ENCODE measurements at regions of chr1 and their contacts with region 1.

Region 1: DNA sequence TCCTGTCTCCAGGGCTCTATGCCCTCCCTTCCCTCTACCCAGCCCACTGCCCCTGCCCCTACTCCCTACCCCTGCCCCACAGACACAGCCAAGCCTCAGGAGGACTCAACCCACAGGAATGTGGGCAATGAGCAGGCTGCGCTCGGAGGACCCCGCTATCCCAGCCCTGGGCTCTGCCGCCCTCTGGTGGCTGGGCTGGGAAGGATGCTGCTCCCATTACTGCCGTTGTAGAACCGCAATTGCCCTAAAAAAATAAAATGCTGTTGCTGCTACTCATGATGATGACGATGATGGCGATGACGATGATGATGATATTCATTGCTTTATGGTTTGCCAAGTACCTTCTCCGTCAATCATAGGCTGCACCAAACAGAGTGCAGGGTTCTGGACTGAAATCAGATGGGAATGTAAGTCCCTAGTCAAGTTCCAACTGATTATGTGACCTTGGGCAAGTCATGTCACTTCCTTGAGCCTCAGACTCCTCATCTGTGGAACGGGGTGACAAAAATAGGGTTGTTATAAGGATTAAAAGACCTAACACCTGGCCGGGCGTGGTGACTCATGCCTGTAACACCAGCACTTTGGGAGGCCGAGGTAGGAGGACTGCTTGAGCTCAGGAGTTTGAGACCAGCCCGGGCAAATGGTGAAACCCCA is 24.6 kb downstream of the ARHGEF19 start:
- DNase-seq: peak in 1 of 2 experiments; percentile 78
- ATAC-seq: peak; percentile 61 to 81
- H3K4me3 ChIP-seq: no peak overlapping the region
- H3K27ac ChIP-seq: peak overlapping the region; percentile 93 to 95
- H3K4me1 ChIP-seq: peaks cover 70% of the 10 kb centered on the region
- CTCF ChIP-seq: peak; percentile 90
- EP300 ChIP-seq: no peak
- POLR2A ChIP-seq: no peak
- RAD21 ChIP-seq: peak; percentile 99

Region 2: DNA sequence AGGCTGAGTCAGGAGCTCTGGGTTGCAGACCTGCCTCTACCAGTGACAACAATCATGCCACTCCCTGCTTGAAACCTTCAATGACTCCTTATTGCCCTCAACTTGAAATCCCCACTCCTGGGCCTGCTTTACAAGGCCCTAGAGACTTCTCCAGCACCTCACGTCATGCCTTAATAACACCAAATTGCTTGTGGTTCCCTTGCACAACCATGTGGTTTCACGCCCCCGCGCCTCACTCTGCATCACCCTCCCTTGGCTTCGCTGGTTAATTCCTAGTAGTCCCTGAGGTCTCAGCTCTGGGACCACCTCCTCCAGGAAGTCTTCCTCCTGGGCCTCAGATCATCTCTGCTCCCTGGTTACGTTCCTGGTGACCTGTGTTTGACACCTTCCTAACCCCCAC is 65.0 kb before region 1 on chr1:
- CTCF ChIA-PET with region 1: interaction called, 37 read pairs
- POLR2A ChIA-PET with region 1: no interaction called
- DNase-seq: no peak
- ATAC-seq: no peak
- H3K4me3 ChIP-seq: no peak overlapping the region
- H3K27ac ChIP-seq: peak overlapping the region in 1 of 2 experiments; percentile 57; a peak in 3 of 6 replicates
- H3K4me1 ChIP-seq: peaks cover 57% of the 10 kb centered on the region
- CTCF ChIP-seq: no peak
- EP300 ChIP-seq: no peak
- POLR2A ChIP-seq: no peak
- RAD21 ChIP-seq: no peak

Region 3: GRCh38 chr1:16155532-16156410 is 32.1 kb before region 1 on chr1 and contains the start of gene EPHA2:
- CTCF ChIA-PET with region 1: interaction called, 152 read pairs
- POLR2A ChIA-PET with region 1: interaction called, 35 read pairs
- DNase-seq: peak; percentile 79 to 91
- ATAC-seq: peak; percentile 76 to 84
- H3K4me3 ChIP-seq: peak within 1 kb of the TSS; percentile 93
- H3K27ac ChIP-seq: peak within 1 kb of the TSS; percentile 97 to 100
- H3K4me1 ChIP-seq: peaks cover 44% of the 10 kb centered on the region
- CTCF ChIP-seq: no peak
- EP300 ChIP-seq: no peak
- POLR2A ChIP-seq: peak; percentile 93
- RAD21 ChIP-seq: peak in 1 of 2 experiments; percentile 16; a peak in 1 of 5 replicates
- polyA plus RNA-seq, gene EPHA2: 55.0 and 59.3 TPM in 2 replicates

Region 4: GRCh38 chr1:16206547-16207317 is 18.9 kb after region 1 on chr1:
- CTCF ChIA-PET with region 1: interaction called, 10 read pairs
- POLR2A ChIA-PET with region 1: interaction called, 3 read pairs
- DNase-seq: peak; percentile 76 to 97
- ATAC-seq: peak; percentile 92 to 95
- H3K4me3 ChIP-seq: peak overlapping the region; percentile 51
- H3K27ac ChIP-seq: peak overlapping the region; percentile 84 to 95
- H3K4me1 ChIP-seq: peaks cover 26% of the 10 kb centered on the region
- CTCF ChIP-seq: no peak
- EP300 ChIP-seq: no peak
- POLR2A ChIP-seq: peak; percentile 85
- RAD21 ChIP-seq: no peak